Activated B cell treated with CpG ODN at 0.5 μM for 24 hours (primary cell): ENCODE measurements at regions of chr15 and their contacts with region 1.

Region 1: GRCh38 chr15:90362936-90363212 is 10.8 kb downstream of the ZNF774 start:
- DNase-seq: no peak
- ATAC-seq: no peak
- H3K4me3 Mint-ChIP-seq: no peak overlapping the region
- H3K27ac Mint-ChIP-seq: no peak overlapping the region
- H3K4me1 Mint-ChIP-seq: peaks cover 8% of the 10 kb centered on the region
- H3K27me3 Mint-ChIP-seq: no peaks in the 10 kb centered on the region
- CTCF ChIP-seq: no peak

Region 2: GRCh38 chr15:89740137-89740536 is 622.7 kb before region 1 on chr15:
- CTCF ChIA-PET with region 1: no interaction called
- POLR2A ChIA-PET with region 1: no interaction called
- intact Hi-C with region 1: no loop called
- DNase-seq: no peak
- ATAC-seq: peak; percentile 90
- H3K4me3 Mint-ChIP-seq: peak overlapping the region; percentile 15
- H3K27ac Mint-ChIP-seq: no peak overlapping the region
- H3K4me1 Mint-ChIP-seq: peaks cover 2% of the 10 kb centered on the region
- H3K27me3 Mint-ChIP-seq: peaks cover 8% of the 10 kb centered on the region
- CTCF ChIP-seq: peak; percentile 25

Region 3: GRCh38 chr15:90352109-90352893 is 10.6 kb before region 1 on chr15 and contains the start of gene ZNF774:
- CTCF ChIA-PET with region 1: no interaction called
- POLR2A ChIA-PET with region 1: no interaction called
- intact Hi-C with region 1: loop called (anchors 1 kb)
- DNase-seq: peak; percentile 78
- ATAC-seq: peak; percentile 98
- H3K4me3 Mint-ChIP-seq: peak within 1 kb of the TSS; percentile 87
- H3K27ac Mint-ChIP-seq: peak within 1 kb of the TSS; percentile 82
- H3K4me1 Mint-ChIP-seq: peaks cover 11% of the 10 kb centered on the region
- H3K27me3 Mint-ChIP-seq: no peaks in the 10 kb centered on the region
- CTCF ChIP-seq: no peak
- total RNA-seq, gene ZNF774: 1.3 and 2.9 TPM in 2 replicates

Region 4: GRCh38 chr15:90400406-90401314 is 37.8 kb after region 1 on chr15:
- CTCF ChIA-PET with region 1: no interaction called
- POLR2A ChIA-PET with region 1: no interaction called
- intact Hi-C with region 1: loop called (anchors 1 kb)
- DNase-seq: no peak
- ATAC-seq: peak; percentile 93
- H3K4me3 Mint-ChIP-seq: peak overlapping the region; percentile 73
- H3K27ac Mint-ChIP-seq: peak overlapping the region; percentile 96
- H3K4me1 Mint-ChIP-seq: peaks cover 63% of the 10 kb centered on the region
- H3K27me3 Mint-ChIP-seq: no peaks in the 10 kb centered on the region
- CTCF ChIP-seq: no peak

Region 5: DNA sequence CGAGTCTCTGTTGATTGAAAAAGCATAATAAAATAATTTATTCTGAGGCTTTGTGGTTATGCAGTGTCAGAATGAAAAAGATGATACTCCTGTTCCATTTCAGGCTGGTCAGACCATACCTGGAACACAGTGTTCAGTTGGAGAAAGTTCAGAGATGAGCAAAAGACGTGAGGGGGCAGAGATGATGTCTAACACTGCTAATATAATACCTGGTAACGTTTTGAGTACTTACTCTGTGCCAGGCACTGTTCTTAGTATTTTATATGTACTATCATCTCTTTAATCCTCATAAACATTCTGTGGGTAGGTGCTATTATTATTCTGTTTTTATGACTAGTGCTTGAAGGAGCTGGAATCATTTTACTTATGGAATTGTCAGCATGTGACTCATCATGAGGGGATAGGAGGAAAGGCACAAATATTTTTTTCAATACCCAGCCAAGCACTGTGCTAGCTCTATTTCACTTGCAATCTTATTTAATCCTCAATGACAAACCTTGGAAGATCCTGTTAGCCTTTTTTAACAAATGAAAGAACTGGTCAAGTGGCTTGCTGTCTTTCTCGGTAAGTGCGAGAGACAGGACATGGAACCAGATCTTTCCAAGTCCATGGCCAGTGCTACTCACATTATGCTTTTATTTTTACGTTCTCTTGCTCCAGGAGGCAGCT is 57.0 kb after region 1 on chr15:
- CTCF ChIA-PET with region 1: interaction called, 4 read pairs
- POLR2A ChIA-PET with region 1: no interaction called
- intact Hi-C with region 1: loop called (anchors 5 kb)
- DNase-seq: no peak
- ATAC-seq: no peak
- H3K4me3 Mint-ChIP-seq: no peak overlapping the region
- H3K27ac Mint-ChIP-seq: no peak overlapping the region
- H3K4me1 Mint-ChIP-seq: peaks cover 64% of the 10 kb centered on the region
- H3K27me3 Mint-ChIP-seq: no peaks in the 10 kb centered on the region
- CTCF ChIP-seq: no peak

Region 6: DNA sequence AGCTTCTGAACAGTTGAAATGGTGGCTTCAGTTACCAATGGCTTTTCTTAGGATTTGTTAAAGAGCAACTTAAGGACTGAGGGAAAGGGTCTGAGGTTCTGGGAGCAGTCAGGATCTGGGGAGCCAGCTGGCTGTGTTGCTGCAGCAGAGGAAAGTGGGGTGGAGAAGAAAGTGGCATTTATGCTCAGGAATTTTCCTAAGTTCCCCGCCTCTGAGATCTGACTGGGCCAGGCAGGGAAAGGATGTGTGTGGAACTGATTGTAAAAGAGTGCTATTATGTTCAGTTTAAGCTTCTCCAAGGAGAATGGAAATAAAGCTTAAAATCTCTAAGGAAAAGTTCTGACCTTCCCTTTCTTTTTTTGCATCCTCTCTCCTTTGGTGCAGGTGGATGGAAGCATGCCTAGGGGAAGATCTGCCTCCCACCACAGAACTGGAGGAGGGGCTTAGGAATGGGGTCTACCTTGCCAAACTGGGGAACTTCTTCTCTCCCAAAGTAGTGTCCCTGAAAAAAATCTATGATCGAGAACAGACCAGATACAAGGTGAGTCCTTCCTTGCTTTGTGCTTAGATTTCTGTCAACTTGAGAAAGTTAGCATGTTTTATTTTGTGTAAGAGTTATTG is 63.0 kb after region 1 on chr15:
- CTCF ChIA-PET with region 1: interaction called, 4 read pairs
- POLR2A ChIA-PET with region 1: no interaction called
- intact Hi-C with region 1: loop called (anchors 2 kb)
- DNase-seq: no peak
- ATAC-seq: no peak
- H3K4me3 Mint-ChIP-seq: no peak overlapping the region
- H3K27ac Mint-ChIP-seq: no peak overlapping the region
- H3K4me1 Mint-ChIP-seq: peaks cover 32% of the 10 kb centered on the region
- H3K27me3 Mint-ChIP-seq: no peaks in the 10 kb centered on the region
- CTCF ChIP-seq: no peak

Region 7: DNA sequence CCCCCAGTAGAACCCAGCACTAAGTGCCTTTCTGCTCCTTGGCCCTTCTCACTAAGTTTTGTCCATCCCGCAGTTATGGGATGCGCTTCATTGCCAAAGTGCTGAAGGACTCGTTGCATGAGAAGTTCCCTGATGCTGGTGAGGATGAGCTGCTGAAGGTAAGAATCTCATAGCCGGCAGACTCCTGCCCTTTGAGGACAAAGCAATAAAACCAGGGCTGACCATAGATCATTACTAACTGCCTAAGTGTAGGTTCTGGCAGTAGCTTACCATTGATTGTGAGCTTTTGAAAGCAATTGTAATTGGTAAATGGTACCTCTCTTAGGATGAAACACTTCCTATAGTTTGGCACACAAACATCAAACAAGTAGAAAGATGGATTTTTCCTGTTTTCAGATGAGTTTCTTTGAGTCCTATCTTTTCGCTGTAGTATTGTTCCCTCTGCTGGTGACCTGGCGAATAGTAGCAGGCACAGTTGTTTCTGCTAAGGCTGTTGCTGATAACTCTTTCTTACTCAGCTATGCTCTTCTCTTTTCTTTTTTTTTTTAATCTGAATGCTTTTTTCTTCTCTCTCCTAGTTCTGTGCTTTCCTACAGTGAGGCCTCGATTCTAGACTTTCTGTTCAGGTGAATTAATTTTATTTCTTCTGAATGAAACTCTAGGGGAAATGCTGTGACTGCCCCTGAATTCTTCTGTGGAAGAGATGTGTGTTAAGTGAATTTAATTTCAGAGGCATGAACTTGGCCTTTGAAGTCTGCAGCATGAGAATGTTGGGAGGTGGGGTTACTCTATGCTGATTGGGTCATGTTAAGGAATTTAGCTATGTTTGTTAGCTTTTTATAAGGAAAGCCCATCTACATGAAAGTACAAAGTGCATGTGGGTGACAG is 119.5 kb after region 1 on chr15:
- CTCF ChIA-PET with region 1: interaction called, 42 read pairs
- POLR2A ChIA-PET with region 1: interaction called, 3 read pairs
- intact Hi-C with region 1: loop called (anchors 1 kb)
- DNase-seq: no peak
- ATAC-seq: no peak
- H3K4me3 Mint-ChIP-seq: no peak overlapping the region
- H3K27ac Mint-ChIP-seq: no peak overlapping the region
- H3K4me1 Mint-ChIP-seq: peaks cover 48% of the 10 kb centered on the region
- H3K27me3 Mint-ChIP-seq: no peaks in the 10 kb centered on the region
- CTCF ChIP-seq: no peak

Region 8: GRCh38 chr15:91022075-91022835 is 659.4 kb after region 1 on chr15 and contains the start of gene VPS33B:
- CTCF ChIA-PET with region 1: no interaction called
- POLR2A ChIA-PET with region 1: no interaction called
- intact Hi-C with region 1: no loop called
- DNase-seq: peak; percentile 63
- ATAC-seq: peak; percentile 83
- H3K4me3 Mint-ChIP-seq: peak within 1 kb of the TSS; percentile 99
- H3K27ac Mint-ChIP-seq: peak within 1 kb of the TSS; percentile 89
- H3K4me1 Mint-ChIP-seq: peaks cover 35% of the 10 kb centered on the region
- H3K27me3 Mint-ChIP-seq: no peaks in the 10 kb centered on the region
- CTCF ChIP-seq: no peak
- total RNA-seq, gene VPS33B: 27.3 and 33.4 TPM in 2 replicates